ENCODE measurements at regions of chr12 and their contacts with region 1.

Region 1: DNA sequence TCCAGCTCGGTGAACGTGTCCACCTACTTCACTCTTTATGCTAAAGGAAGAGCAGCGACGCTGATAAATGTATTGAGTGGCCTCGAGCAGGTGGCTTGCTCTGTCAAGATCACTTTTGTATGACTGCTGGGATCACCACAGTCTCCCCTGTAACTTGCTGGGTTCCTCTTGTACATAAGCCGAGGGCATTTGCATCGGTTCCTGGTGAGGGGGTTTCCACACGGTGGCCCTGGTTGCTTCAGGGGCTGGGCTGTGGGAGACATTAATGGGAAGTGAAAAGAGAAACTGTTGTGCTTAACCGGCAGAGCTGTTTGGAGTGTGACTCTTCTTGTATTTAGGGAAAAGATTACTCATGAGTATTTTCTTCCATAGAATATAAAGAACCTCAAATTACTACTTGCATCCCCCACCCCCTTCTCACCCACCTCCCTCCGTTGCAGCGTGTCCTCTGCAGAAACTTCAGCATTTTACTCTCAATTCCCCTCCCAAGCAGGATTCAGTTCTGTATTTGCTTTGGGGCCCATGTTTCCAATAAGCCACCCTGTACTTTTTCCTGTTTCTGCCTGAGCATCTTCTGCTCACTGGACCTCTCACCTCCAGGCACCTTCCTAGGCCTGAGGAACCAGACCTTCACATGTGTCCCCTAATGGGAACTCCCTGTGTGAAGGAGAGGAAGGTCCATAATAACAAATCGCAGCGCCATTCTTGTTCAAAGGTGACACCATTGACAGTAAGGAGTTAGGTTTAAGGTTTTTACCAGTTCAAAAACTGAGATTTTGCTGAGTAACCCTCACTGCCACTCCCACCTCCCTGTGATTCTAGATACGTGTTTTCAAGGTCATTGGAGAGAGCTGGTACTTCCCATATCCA is 187.0 kb downstream of the ETV6 start:
- DNase-seq: peak; percentile 93 to 98 (median 96)
- H3K4me3 ChIP-seq: peak overlapping the region in 1 of 3 experiments; percentile 46
- H3K4me3 Mint-ChIP-seq: peak overlapping the region; percentile 58 to 77
- H3K27ac ChIP-seq: peak overlapping the region; percentile 71 to 92
- H3K27ac Mint-ChIP-seq: peak overlapping the region; percentile 95 to 99 (median 98)
- H3K4me1 ChIP-seq: peaks cover 90 to 96% of the 10 kb centered on the region in 2 donors
- H3K4me1 Mint-ChIP-seq: peaks cover 93% of the 10 kb centered on the region
- H3K27me3 ChIP-seq: no peaks in the 10 kb centered on the region
- H3K27me3 Mint-ChIP-seq: no peaks in the 10 kb centered on the region
- CTCF ChIP-seq: no peak

Region 2: GRCh38 chr12:10867381-10867780 is 969.1 kb before region 1 on chr12:
- intact Hi-C with region 1: no loop called
- DNase-seq: no peak
- H3K4me3 ChIP-seq: no peak overlapping the region
- H3K4me3 Mint-ChIP-seq: no peak overlapping the region
- H3K27ac ChIP-seq: no peak overlapping the region
- H3K27ac Mint-ChIP-seq: no peak overlapping the region
- H3K4me1 ChIP-seq: no peaks in the 10 kb centered on the region
- H3K4me1 Mint-ChIP-seq: peaks cover 2% of the 10 kb centered on the region
- H3K27me3 ChIP-seq: no peaks in the 10 kb centered on the region
- H3K27me3 Mint-ChIP-seq: peaks cover 0 to 1% (median 0%) of the 10 kb centered on the region in 3 donors
- CTCF ChIP-seq: no peak

Region 3: GRCh38 chr12:11746024-11746771 is 90.3 kb before region 1 on chr12:
- intact Hi-C with region 1: loop called (anchors 5 to 10 kb)
- DNase-seq: peak; percentile 95 to 99 (median 99)
- H3K4me3 ChIP-seq: no peak overlapping the region
- H3K4me3 Mint-ChIP-seq: peak overlapping the region; percentile 35 to 37
- H3K27ac ChIP-seq: peak overlapping the region; percentile 91 to 100
- H3K27ac Mint-ChIP-seq: peak overlapping the region; percentile 94 to 99 (median 97)
- H3K4me1 ChIP-seq: peaks cover 77 to 88% of the 10 kb centered on the region in 2 donors
- H3K4me1 Mint-ChIP-seq: peaks cover 90% of the 10 kb centered on the region
- H3K27me3 ChIP-seq: no peaks in the 10 kb centered on the region
- H3K27me3 Mint-ChIP-seq: no peaks in the 10 kb centered on the region
- CTCF ChIP-seq: no peak

Region 4: GRCh38 chr12:11765817-11766794 is 70.4 kb before region 1 on chr12:
- intact Hi-C with region 1: loop called in 1 of 2 experiments (anchors 5 kb)
- DNase-seq: peak; percentile 84 to 96 (median 95)
- H3K4me3 ChIP-seq: peak overlapping the region; percentile 11 to 57 (median 14)
- H3K4me3 Mint-ChIP-seq: peak overlapping the region; percentile 78 to 89
- H3K27ac ChIP-seq: peak overlapping the region; percentile 97
- H3K27ac Mint-ChIP-seq: peak overlapping the region; percentile 99 to 100 (median 99)
- H3K4me1 ChIP-seq: peaks cover 91 to 97% of the 10 kb centered on the region in 2 donors
- H3K4me1 Mint-ChIP-seq: peaks cover 96% of the 10 kb centered on the region
- H3K27me3 ChIP-seq: no peaks in the 10 kb centered on the region
- H3K27me3 Mint-ChIP-seq: no peaks in the 10 kb centered on the region
- CTCF ChIP-seq: no peak

Region 5: GRCh38 chr12:11777474-11777873 is 59.0 kb before region 1 on chr12:
- intact Hi-C with region 1: no loop called
- DNase-seq: no peak
- H3K4me3 ChIP-seq: no peak overlapping the region
- H3K4me3 Mint-ChIP-seq: no peak overlapping the region
- H3K27ac ChIP-seq: peak overlapping the region in 1 of 2 donors; percentile 49
- H3K27ac Mint-ChIP-seq: peak overlapping the region in 4 of 7 donors; percentile 27 to 83 (median 60)
- H3K4me1 ChIP-seq: peaks cover 41 to 51% of the 10 kb centered on the region in 2 donors
- H3K4me1 Mint-ChIP-seq: peaks cover 59% of the 10 kb centered on the region
- H3K27me3 ChIP-seq: no peaks in the 10 kb centered on the region
- H3K27me3 Mint-ChIP-seq: no peaks in the 10 kb centered on the region
- CTCF ChIP-seq: no peak

Region 6: DNA sequence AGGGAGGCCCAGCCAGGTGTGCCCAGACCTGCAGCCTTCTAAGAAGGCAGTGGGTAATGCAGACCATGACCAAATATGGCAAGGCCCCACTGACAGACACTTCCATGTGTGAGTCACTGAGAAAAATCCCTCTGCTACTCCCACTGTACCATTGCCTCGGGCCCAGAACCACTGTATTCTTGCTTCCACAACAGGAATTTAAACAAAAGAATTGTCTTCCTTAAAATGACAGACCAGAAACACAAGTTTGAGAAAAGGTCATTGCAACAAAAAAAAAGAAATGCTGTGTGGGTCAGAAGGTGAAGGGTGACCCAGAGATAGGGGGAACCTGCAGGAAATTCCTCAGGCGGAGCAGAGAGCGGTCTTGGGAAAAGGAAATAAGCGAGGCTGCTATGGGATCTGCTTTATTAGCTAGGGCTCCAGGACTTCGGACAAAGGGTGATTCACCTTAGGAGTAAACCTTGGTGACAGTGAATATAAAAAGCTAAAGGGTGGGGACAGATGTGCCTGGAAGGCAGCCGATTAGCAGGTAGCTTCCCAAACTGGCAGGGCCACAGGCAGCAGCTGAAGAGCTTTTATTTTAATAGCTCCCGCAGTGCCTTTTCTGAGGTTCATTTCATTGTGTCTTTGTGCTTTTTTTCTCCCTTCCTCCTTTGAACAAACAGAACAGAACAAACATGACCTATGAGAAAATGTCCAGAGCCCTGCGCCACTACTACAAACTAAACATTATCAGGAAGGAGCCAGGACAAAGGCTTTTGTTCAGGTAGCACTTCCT is 48.9 kb after region 1 on chr12:
- intact Hi-C with region 1: loop called in 1 of 2 experiments (anchors 5 kb)
- DNase-seq: peak; percentile 51 to 89 (median 70)
- H3K4me3 ChIP-seq: peak overlapping the region in 1 of 3 experiments; percentile 21
- H3K4me3 Mint-ChIP-seq: no peak overlapping the region
- H3K27ac ChIP-seq: peak overlapping the region; percentile 88 to 92
- H3K27ac Mint-ChIP-seq: peak overlapping the region; percentile 81 to 94 (median 89)
- H3K4me1 ChIP-seq: peaks cover 31 to 33% of the 10 kb centered on the region in 2 donors
- H3K4me1 Mint-ChIP-seq: peaks cover 38% of the 10 kb centered on the region
- H3K27me3 ChIP-seq: no peaks in the 10 kb centered on the region
- H3K27me3 Mint-ChIP-seq: no peaks in the 10 kb centered on the region
- CTCF ChIP-seq: no peak

Region 7: DNA sequence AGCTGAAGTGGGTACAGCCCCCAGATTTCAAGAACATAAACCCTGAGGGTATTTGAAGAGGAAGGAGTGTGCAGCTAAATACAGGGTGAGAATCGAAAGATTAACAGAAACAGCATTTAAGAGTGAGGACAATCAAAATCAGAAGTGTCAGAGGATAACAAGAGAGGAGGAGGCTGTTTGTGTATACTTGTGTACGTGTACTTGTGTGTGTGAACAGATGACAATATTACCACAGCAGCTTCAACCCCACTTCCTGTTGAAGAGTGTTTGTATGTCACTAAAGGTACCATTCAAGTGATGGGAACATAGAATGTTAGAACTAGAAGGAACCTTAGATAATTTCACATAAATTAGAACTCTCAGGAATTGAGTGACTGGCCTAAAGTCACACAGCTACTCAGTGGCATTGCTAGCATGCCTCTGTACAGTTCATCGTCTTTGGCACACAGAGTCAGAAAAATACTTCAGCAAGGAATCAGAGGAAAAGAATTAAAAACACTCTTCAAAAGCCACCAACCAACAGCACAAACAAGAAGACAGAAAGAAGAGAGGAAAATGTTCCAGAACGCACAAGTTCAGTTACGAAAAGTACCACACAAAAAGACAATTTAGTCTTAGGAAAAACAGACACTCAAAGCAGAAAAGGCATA is 69.9 kb after region 1 on chr12:
- intact Hi-C with region 1: no loop called
- DNase-seq: no peak
- H3K4me3 ChIP-seq: no peak overlapping the region
- H3K4me3 Mint-ChIP-seq: no peak overlapping the region
- H3K27ac ChIP-seq: no peak overlapping the region
- H3K27ac Mint-ChIP-seq: peak overlapping the region in 1 of 7 donors; percentile 33
- H3K4me1 ChIP-seq: no peaks in the 10 kb centered on the region
- H3K4me1 Mint-ChIP-seq: no peaks in the 10 kb centered on the region
- H3K27me3 ChIP-seq: no peaks in the 10 kb centered on the region
- H3K27me3 Mint-ChIP-seq: peaks cover 0 to 2% (median 1%) of the 10 kb centered on the region in 3 donors
- CTCF ChIP-seq: no peak

Measured in CD14-positive monocyte (primary cell).